ENCODE measurements at regions of chr12 and their contacts with region 1.

Region 1: DNA sequence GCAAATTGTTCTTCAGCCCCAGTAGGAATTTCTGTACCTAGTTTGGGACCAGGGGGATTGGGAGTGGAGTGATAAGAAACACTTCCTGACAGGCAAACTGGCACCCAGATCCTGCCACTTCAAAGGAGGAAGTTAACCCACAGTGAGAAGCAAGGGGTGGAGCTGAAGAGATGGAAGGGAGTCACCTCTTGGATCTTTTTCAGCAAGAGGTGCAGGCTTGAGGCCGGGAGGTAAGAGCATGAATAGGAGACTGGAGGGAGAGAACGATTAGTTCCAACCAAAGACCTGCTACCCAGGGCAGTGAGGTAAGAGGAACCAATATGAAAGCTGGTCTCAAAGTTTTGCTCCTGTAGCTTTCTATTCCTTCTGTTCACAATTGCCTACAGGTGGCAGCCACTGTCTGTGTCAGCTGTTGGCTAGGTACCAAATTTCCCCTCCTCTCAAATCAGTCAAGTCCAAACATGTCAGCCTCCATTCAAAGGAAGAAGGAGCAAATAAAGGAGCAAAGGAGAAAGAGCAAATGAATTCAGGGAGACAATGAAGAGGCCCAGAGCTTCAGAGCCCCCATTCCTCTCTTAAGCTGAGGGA is 14.9 kb upstream of the TAC3 start:
- DNase-seq: peak; percentile 39
- ATAC-seq: peak; percentile 42
- H3K4me3 Mint-ChIP-seq: no peak overlapping the region
- H3K27ac Mint-ChIP-seq: peak overlapping the region; percentile 26
- H3K4me1 Mint-ChIP-seq: peaks cover 39% of the 10 kb centered on the region
- H3K27me3 Mint-ChIP-seq: no peaks in the 10 kb centered on the region
- CTCF ChIP-seq: no peak

Region 2: DNA sequence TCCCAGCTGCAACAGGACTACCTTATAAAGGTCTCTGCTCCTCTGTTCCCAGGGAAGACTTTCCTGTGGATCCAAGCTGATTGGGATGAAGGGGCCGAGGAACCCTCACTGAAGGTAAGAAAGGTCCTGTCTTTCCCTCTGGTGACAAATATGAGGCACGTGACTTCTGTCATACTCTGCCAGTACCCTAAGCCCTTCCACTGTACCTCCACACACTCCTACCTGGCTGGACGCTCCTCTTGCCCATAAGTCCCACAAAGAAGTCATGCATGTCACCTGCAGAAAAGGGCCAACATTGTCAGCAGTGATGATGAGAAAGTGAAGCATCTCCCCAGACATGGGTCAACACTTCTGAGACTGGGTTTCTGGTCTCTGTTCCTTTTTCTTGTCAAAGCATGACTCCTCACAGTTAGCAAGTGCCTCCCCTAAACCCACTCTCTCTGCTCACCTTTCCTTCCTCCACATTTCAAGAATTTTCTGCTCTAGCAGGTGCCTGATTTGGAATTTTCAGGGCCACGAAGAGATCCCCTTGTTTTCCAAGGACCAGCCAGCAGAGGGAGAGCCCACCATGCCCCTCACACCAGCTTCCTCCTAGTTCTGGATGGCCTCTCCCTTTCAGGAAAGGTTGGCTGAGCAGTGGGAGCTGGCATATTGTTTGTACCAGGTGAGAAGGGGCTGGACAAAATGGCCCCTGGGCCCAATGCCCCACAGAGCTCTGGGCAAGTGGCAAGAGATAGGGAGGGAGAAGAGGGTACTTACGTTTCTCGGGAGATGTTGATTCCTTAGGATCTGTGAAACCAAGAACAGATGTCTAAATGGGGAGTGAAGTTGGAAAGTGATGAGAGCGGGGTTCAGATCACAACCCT is 18.4 kb before region 1 on chr12:
- CTCF ChIA-PET with region 1: interaction called, 22 read pairs
- POLR2A ChIA-PET with region 1: interaction called, 5 read pairs
- intact Hi-C with region 1: no loop called
- DNase-seq: no peak
- ATAC-seq: no peak
- H3K4me3 Mint-ChIP-seq: no peak overlapping the region
- H3K27ac Mint-ChIP-seq: no peak overlapping the region
- H3K4me1 Mint-ChIP-seq: peaks cover 23% of the 10 kb centered on the region
- H3K27me3 Mint-ChIP-seq: no peaks in the 10 kb centered on the region
- CTCF ChIP-seq: no peak

Region 3: DNA sequence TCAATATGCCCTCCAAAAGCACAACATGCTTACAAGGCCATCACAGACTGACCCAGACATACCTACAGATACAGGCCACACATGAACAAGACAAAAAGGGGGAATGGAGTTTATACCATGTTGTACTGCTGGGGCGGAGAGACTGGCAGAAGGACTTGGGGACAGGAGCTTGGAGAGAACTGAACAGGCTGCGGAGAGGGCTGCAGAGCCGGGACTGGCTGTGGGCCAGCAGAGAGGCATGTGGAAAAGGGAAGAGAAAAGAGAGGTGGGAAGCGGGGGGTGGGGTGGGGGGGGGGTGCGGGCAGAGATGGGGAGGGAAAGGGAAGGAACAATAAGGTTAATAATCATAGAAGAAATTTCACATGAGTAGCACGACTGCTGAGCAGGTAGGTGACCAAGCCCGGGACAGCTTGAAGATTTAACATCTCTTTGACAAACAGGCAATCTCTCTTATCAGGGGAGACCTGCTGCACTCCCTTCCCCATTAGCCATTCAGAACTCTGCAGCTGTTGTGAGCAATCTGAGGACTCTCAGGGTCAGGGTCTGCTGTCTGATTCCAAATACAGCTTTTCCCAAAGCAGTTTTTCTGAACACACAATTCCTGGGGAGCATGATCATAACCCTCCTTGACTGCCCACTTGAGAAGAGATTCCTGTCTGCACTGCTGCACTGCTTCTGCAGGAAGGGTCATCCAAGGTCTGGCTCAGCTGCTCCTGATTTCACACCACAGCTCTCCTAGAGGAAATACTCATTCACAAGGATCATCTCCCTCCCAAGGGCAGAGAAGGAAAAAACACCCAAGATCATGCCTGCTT is 241.3 kb after region 1 on chr12:
- CTCF ChIA-PET with region 1: no interaction called
- POLR2A ChIA-PET with region 1: no interaction called
- intact Hi-C with region 1: no loop called
- DNase-seq: no peak
- ATAC-seq: no peak
- H3K4me3 Mint-ChIP-seq: no peak overlapping the region
- H3K27ac Mint-ChIP-seq: no peak overlapping the region
- H3K4me1 Mint-ChIP-seq: peaks cover 12% of the 10 kb centered on the region
- H3K27me3 Mint-ChIP-seq: no peaks in the 10 kb centered on the region
- CTCF ChIP-seq: no peak

Measured in activated CD8-positive, alpha-beta T cell treated with anti-CD3 and anti-CD28 coated beads for 36 hours (primary cell).